Right ventricle myocardium inferior (tissue), 1 donor: ENCODE measurements at regions of chr17 and their contacts with region 1.

Region 1: DNA sequence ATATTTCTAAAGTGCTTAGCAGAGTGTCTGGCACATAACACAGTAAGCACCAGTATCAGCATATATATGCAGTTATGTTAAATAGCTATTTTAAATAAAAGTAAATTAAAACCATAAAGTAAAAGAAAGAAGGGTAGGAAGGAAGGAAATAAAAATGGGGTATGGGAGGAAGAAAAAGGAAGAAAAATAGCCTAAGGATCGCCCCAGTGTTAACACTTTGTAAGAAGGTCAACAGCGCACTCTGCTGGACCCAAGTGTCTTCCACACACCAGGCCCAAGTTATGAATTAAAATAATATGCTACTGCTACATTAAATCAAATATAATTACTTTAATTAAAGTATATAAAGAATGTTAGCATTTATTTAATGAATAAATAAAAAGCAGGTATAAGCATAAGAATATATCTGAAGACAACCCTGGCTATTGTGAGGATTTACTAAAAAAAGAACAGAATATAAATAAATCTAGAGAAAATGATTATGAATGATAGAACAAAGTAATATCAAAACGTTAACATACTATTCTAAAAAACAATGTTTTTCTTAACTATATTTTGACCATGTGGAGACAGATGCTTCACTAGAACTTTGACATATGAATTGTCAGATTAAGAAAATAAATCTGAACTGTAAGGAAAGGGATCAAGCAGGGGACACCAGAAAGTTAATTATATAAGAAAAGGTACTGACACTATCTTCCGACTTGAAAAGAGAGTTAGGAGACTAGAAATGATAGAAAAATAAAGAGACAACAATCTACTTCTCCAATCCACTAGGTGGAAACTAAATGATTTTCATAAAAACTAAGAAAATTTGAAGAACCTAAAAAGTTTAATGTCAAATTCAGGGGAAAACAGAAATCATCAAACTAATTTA is 25.9 kb downstream of the BRIP1 start:
- DNase-seq: peak; percentile 67
- ATAC-seq: no peak

Region 2: GRCh38 chr17:61420052-61420451 is 417.4 kb before region 1 on chr17:
- intact Hi-C with region 1: loop called (anchors 5 kb)
- DNase-seq: no peak
- ATAC-seq: no peak

Region 3: DNA sequence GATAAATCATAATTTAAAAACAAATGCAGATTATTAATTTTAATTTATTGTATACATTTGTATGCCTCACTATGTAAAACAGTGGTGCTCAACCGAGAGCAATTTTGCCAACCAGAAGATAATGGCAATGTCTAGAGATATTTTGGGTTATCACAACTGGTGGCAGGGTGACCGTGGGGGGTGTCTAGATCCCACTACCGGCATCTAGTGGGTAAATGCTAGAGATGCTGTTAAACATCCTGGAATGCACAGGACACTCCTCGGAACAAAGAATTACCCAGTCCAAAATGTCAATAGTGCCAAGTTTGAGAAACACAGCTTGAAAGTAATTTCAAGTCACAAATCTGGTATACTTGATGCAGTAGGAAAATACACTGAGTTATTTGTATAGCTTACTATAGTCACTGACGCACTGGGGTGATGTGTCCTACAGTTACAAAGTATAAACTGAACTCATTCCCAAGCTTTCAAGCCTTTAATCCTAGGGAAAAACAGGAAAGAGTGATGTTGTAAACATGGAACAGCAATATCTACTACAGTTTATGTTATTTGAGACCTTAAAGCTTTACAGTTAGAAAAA is 107.6 kb before region 1 on chr17:
- intact Hi-C with region 1: no loop called
- DNase-seq: no peak
- ATAC-seq: no peak